Heart right ventricle (tissue), 16 donors: ENCODE measurements at regions of chr22 and their contacts with region 1.

Region 1: GRCh38 chr22:25404928-25405816 is 159.3 kb upstream of the GRK3 start:
- DNase-seq: peak; percentile 80 to 89
- ATAC-seq: peak; percentile 42 to 82 (median 64)
- H3K4me3 ChIP-seq: peak overlapping the region; percentile 49 to 97 (median 74)
- H3K27ac ChIP-seq: peak overlapping the region; percentile 81 to 97 (median 92)
- H3K4me1 ChIP-seq: peaks cover 26 to 53% (median 49%) of the 10 kb centered on the region in 9 donors
- H3K27me3 ChIP-seq: no peaks in the 10 kb centered on the region
- CTCF ChIP-seq: no peak

Region 2: GRCh38 chr22:25368271-25368670 is 36.9 kb before region 1 on chr22:
- intact Hi-C with region 1: loop called in 7 of 10 experiments (anchors 5 kb)
- DNase-seq: no peak
- ATAC-seq: peak in 1 of 8 donors; percentile 55
- H3K4me3 ChIP-seq: no peak overlapping the region
- H3K27ac ChIP-seq: no peak overlapping the region
- H3K4me1 ChIP-seq: peaks cover 16 to 51% (median 29%) of the 10 kb centered on the region in 9 donors
- H3K27me3 ChIP-seq: no peaks in the 10 kb centered on the region
- CTCF ChIP-seq: no peak

Region 3: GRCh38 chr22:25447686-25448434 is 42.7 kb after region 1 on chr22:
- intact Hi-C with region 1: loop called in 1 of 10 experiments (anchors 5 kb)
- DNase-seq: peak; percentile 89 to 95
- ATAC-seq: peak; percentile 95 to 97 (median 97)
- H3K4me3 ChIP-seq: peak overlapping the region; percentile 44 to 90 (median 82)
- H3K27ac ChIP-seq: peak overlapping the region in 9 of 10 donors; percentile 52 to 92 (median 84)
- H3K4me1 ChIP-seq: peaks cover 0 to 48% (median 26%) of the 10 kb centered on the region in 9 donors
- H3K27me3 ChIP-seq: no peaks in the 10 kb centered on the region
- CTCF ChIP-seq: peak; percentile 86 to 99 (median 94)